Mammary epithelial cell (primary cell): ENCODE measurements at regions of chr17 and their contacts with region 1.

Region 1: GRCh38 chr17:35119368-35120165 is at the start of gene RAD51D:
- DNase-seq: peak; percentile 55
- H3K4me3 ChIP-seq: peak within 1 kb of the TSS; percentile 76 to 84 (median 82)
- H3K27ac ChIP-seq: peak within 1 kb of the TSS; percentile 48
- H3K4me1 ChIP-seq: peaks cover 15% of the 10 kb centered on the region
- H3K27me3 ChIP-seq: no peaks in the 10 kb centered on the region
- CTCF ChIP-seq: peak; percentile 73 to 80
- total RNA-seq, gene RAD51D: 8.5 to 15.0 TPM

Region 2: DNA sequence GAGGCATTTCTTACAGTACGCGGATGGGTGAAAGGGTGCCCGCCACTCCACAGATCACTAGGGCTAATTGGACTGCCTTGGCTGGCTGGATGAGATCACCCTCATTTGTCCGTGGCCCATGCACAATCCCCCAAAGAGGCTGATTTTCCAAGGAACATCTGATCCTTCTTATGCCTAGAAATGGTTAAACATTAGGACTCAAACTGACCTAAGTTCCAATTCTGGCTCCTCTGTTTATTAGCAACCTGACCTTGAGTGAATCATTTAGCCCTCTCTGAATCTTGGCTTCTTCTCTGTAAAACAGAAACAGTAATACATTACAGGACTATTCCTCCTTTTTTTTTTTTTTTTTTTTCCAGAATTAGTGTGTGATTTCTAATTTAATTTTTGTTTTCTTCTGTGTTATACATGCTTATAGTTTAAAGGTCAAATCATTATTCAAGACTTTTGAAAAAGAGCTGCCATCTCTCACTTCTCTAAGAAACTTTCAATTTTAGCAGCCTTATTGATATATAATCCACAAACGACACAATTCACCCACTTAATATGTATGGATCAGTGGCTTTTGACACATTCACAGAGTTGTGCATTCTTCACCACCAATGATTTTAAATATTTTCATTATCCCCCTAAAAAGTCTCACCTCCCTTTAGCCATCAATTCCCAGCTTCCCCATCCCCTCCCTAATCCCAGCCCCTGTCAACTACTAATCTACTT is 585.6 kb before region 1 on chr17:
- CTCF ChIA-PET with region 1: no interaction called
- dilution Hi-C with region 1: no loop called
- in situ Hi-C with region 1: loop called (anchors 10 kb)
- intact Hi-C with region 1: no loop called
- DNase-seq: no peak
- H3K4me3 ChIP-seq: no peak overlapping the region
- H3K27ac ChIP-seq: no peak overlapping the region
- H3K4me1 ChIP-seq: no peaks in the 10 kb centered on the region
- H3K27me3 ChIP-seq: no peaks in the 10 kb centered on the region
- CTCF ChIP-seq: no peak

Region 3: DNA sequence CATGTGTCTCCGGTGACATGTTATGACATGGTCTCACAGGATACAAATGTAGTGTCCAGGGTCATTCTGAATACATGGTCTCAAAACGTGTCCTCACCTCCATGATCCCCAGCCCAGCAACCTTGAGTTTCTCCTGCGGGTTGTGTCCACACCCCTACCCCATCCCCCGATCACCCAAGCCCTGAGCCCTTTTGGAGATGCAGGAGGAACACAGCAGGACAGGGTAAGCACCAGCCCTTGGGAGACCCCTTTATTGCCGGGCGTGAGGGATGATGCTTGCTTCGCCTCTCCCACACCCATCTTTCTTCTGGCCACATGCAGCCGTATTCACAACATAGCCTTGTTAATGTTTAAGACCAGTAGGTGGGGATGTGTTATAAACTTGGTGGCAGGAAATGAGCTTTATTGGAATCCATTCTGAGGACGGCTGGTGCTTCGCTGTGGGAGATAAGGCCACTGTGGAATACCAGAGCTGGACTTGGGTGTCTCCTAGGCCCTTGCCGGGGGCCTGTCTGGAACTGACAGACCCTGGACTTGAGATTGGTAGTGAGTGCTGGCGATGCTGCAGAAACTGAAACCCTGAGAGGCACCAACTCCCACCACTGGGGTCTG is 534.7 kb before region 1 on chr17:
- CTCF ChIA-PET with region 1: interaction called, 5 read pairs
- dilution Hi-C with region 1: no loop called
- in situ Hi-C with region 1: no loop called
- intact Hi-C with region 1: loop called (anchors 2 kb)
- DNase-seq: peak; percentile 15
- H3K4me3 ChIP-seq: no peak overlapping the region
- H3K27ac ChIP-seq: no peak overlapping the region
- H3K4me1 ChIP-seq: no peaks in the 10 kb centered on the region
- H3K27me3 ChIP-seq: peaks cover 30% of the 10 kb centered on the region
- CTCF ChIP-seq: peak; percentile 6 to 45

Region 4: DNA sequence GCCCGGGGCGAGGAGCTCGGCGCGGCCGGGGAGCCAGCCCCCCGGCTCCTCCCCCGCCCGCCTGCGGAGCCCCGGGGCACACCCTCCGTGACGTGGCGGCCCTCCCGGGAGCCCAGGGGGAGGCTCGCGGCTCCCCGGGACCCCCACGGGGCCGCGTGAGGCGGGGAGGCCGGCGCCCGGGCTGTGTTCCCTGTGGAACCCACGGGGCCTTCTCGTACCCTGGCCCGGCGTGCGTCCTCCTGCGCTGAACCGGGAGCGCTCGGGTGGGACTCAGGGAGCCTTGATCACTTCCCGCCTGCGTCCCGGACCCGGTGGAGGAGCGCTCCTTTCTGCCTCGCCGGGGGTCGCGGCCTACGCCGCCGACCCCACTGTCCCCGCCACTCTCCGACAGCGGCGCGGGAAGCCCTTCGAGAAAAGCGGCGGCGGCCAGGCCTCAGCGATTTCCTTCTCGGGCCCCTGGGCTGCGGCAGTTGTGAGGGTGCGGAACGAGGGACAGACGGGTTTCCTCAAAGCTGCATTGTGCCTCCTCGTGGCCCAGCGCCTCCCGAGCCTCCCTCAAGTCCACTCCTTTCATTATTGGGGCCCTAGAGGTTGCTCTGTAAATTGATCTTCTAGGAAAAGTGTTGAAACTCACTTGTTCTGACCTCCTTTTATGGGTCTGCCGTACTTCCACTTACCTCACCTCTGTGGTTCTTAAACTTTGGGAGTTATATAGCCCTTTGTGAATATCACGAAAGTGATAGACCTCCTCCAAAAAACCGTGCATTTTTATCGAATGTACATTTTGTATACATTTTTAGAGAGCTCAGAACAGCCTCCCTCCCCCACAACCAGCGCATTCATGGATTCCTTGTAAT is 138.7 kb before region 1 on chr17:
- CTCF ChIA-PET with region 1: interaction called, 3 read pairs
- dilution Hi-C with region 1: no loop called
- in situ Hi-C with region 1: no loop called
- intact Hi-C with region 1: loop called (anchors 1 kb)
- DNase-seq: peak; percentile 78
- H3K4me3 ChIP-seq: peak overlapping the region; percentile 71 to 85 (median 72)
- H3K27ac ChIP-seq: peak overlapping the region; percentile 90
- H3K4me1 ChIP-seq: peaks cover 12% of the 10 kb centered on the region
- H3K27me3 ChIP-seq: no peaks in the 10 kb centered on the region
- CTCF ChIP-seq: peak; percentile 40 to 48

Region 5: DNA sequence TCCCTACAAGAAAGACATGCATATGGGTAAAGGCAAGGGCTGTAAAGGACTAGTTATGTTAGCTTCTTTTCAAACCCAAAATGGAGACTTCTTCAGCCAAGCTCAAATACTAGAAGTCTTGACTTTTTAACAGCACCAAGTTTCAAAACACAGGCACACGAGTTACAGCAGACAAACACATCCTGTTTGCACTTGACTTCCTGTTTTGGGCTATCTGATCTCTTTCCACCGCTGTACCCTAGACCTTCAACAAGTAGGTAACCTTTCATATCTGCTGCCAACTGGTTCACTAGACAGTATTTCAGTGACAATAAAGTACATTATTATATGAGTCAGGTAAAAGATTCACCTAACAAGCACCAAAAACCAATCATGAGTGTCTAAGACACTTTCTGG is 68.4 kb before region 1 on chr17:
- CTCF ChIA-PET with region 1: no interaction called
- dilution Hi-C with region 1: no loop called
- in situ Hi-C with region 1: loop called in 1 of 2 experiments (anchors 10 kb)
- intact Hi-C with region 1: no loop called
- DNase-seq: no peak
- H3K4me3 ChIP-seq: no peak overlapping the region
- H3K27ac ChIP-seq: no peak overlapping the region
- H3K4me1 ChIP-seq: peaks cover 8% of the 10 kb centered on the region
- H3K27me3 ChIP-seq: no peaks in the 10 kb centered on the region
- CTCF ChIP-seq: no peak